Sigmoid colon (tissue), 7 donors: ENCODE measurements at regions of chr5 and their contacts with region 1.

Region 1: DNA sequence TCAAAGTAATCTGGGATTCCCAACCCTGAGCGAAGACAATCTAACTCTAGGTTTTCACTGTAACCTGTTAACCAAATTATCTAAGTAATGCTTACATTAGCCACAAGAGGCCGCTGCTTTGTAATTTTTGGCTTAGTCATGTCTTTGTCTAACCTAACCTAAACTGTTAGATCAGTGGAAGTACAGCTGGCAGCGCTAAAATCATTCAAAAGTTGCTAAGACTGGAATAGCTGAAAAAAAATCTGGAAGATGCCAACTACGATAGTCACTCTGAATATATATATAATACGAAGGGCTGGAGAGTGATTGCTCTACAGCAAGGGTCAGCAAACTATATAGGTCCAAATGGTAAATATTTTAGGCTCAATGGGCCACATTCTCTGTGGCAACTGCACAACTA is 60.2 kb downstream of the FBXO38 start:
- DNase-seq: peak; percentile 66
- H3K4me3 ChIP-seq: no peak overlapping the region
- H3K27ac ChIP-seq: no peak overlapping the region
- H3K4me1 ChIP-seq: peaks cover 0 to 21% (median 0%) of the 10 kb centered on the region in 4 donors
- H3K27me3 ChIP-seq: no peaks in the 10 kb centered on the region
- CTCF ChIP-seq: peak; percentile 59 to 78 (median 65)
- EP300 ChIP-seq: no peak
- POLR2A ChIP-seq: no peak

Region 2: GRCh38 chr5:148179234-148179824 is 264.7 kb before region 1 on chr5:
- intact Hi-C with region 1: loop called (anchors 5 kb)
- DNase-seq: no peak
- H3K4me3 ChIP-seq: no peak overlapping the region
- H3K27ac ChIP-seq: no peak overlapping the region
- H3K4me1 ChIP-seq: peaks cover 0 to 11% (median 2%) of the 10 kb centered on the region in 4 donors
- H3K27me3 ChIP-seq: no peaks in the 10 kb centered on the region
- CTCF ChIP-seq: peak; percentile 42 to 73 (median 54)
- EP300 ChIP-seq: no peak
- POLR2A ChIP-seq: no peak

Region 3: GRCh38 chr5:148653836-148654781 is 210.1 kb after region 1 on chr5 and contains the start of gene HTR4:
- intact Hi-C with region 1: loop called (anchors 10 kb)
- DNase-seq: peak; percentile 58
- H3K4me3 ChIP-seq: peak within 1 kb of the TSS; percentile 53 to 69 (median 58)
- H3K27ac ChIP-seq: peak within 1 kb of the TSS in 3 of 4 donors; percentile 75 to 82 (median 77)
- H3K4me1 ChIP-seq: peaks cover 0 to 15% (median 15%) of the 10 kb centered on the region in 4 donors
- H3K27me3 ChIP-seq: peaks cover 0 to 16% (median 0%) of the 10 kb centered on the region in 3 donors
- CTCF ChIP-seq: no peak
- EP300 ChIP-seq: no peak
- POLR2A ChIP-seq: no peak
- total RNA-seq, gene HTR4: 1.7 to 16.1 (median 4.1) TPM

Region 4: GRCh38 chr5:149035372-149035790 is 591.4 kb after region 1 on chr5:
- intact Hi-C with region 1: loop called (anchors 5 kb)
- DNase-seq: peak; percentile 81
- H3K4me3 ChIP-seq: no peak overlapping the region
- H3K27ac ChIP-seq: no peak overlapping the region
- H3K4me1 ChIP-seq: no peaks in the 10 kb centered on the region
- H3K27me3 ChIP-seq: no peaks in the 10 kb centered on the region
- CTCF ChIP-seq: peak; percentile 50 to 82 (median 71)
- EP300 ChIP-seq: no peak
- POLR2A ChIP-seq: no peak

Region 5: GRCh38 chr5:149114403-149115312 is 670.7 kb after region 1 on chr5:
- intact Hi-C with region 1: loop called (anchors 10 kb)
- DNase-seq: peak; percentile 68
- H3K4me3 ChIP-seq: no peak overlapping the region
- H3K27ac ChIP-seq: no peak overlapping the region
- H3K4me1 ChIP-seq: peaks cover 0 to 4% (median 0%) of the 10 kb centered on the region in 4 donors
- H3K27me3 ChIP-seq: no peaks in the 10 kb centered on the region
- CTCF ChIP-seq: peak in 3 of 4 experiments; percentile 53 to 57 (median 56)
- EP300 ChIP-seq: no peak
- POLR2A ChIP-seq: no peak